Activated naive CD4-positive, alpha-beta T cell treated with anti-CD3 and anti-CD28 coated beads, Interleukin-2, amount 10 ng/mL, durations not matched to agents 7 days and 5 days (primary cell): ENCODE measurements at regions of chr14 and their contacts with region 1.

Region 1: DNA sequence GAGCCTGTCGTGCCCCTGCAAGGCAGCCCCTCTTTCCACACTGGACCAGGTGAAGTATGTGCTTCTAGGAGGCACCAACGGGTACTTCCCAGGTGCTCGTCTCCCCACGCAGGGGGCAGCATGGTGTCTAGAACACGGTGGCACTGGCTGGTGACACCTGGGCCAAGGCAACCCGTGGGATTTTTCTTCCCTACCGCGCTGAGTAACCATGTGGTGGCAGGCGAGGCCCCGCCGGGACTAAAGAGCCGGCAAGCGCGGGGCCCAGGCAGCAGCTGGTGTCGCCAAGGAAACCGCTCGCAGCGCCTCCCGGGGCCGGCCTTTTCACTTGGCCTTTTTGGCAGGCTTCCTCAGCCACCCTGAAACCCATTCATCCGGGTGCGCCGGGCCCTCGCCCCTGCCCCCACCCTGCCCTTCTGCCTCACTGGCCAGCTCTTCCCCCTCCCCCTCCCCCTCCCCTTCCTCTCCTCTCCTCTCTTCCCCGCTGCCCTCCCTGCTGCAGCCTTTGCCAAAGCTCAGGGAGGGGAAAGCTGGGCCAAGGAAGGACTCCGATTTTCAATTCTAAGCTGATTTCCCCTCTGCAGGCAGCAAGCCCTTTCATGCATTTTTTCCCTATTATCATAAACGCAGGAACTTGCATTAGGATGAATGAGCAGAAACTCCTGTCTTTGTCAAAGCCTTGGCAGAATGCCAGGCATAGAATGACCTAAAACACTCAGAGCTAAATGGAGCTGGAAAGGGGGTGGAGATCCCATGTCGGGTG is 81.2 kb downstream of the IRF2BPL start:
- DNase-seq: peak; percentile 86
- H3K4me3 Mint-ChIP-seq: no peak overlapping the region
- H3K27ac Mint-ChIP-seq: peak overlapping the region; percentile 81
- H3K4me1 Mint-ChIP-seq: peaks cover 54% of the 10 kb centered on the region
- H3K27me3 Mint-ChIP-seq: no peaks in the 10 kb centered on the region

Region 2: GRCh38 chr14:76697246-76697905 is 249.9 kb before region 1 on chr14:
- CTCF ChIA-PET with region 1: no interaction called
- DNase-seq: no peak
- H3K4me3 Mint-ChIP-seq: no peak overlapping the region
- H3K27ac Mint-ChIP-seq: no peak overlapping the region
- H3K4me1 Mint-ChIP-seq: no peaks in the 10 kb centered on the region
- H3K27me3 Mint-ChIP-seq: peaks cover 3% of the 10 kb centered on the region

Region 3: DNA sequence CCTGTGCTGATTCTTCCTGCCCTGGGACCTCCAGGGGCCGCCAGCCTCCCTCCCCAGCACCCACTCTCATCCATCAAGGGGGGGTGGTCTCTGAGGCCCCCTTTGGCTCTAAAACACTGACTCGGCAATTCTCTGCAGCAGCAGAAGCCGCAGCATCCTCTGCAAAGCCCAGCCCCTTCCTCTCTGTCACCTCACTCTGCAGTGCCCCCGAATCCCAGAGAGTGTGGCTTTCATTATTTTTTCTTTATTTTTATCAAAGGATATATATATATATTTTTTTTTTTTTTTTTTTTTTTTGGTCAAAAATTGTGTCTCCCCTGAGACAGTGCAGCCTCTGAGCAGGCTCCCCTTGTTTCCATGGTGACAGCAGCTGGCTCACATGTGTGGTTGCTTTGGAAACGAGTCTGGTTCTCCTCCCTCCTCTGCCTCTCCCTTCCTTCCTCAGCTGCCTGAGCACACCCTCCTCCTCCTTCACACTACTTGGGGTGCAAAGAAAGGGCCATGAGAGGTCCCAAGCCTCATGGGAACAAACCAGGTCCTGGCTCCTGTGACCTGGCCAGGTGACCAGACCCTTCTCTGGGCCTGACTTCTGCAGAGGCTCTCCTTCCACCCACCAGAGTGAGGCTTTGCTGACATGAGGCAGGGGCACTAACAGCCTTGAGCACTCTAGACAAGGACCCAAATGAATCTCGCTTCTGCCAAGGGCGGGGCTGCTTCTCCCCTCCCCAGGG is 20.6 kb before region 1 on chr14:
- CTCF ChIA-PET with region 1: interaction called, 17 read pairs
- DNase-seq: peak; percentile 88
- H3K4me3 Mint-ChIP-seq: peak overlapping the region; percentile 69
- H3K27ac Mint-ChIP-seq: peak overlapping the region; percentile 93
- H3K4me1 Mint-ChIP-seq: peaks cover 97% of the 10 kb centered on the region
- H3K27me3 Mint-ChIP-seq: peaks cover 20% of the 10 kb centered on the region

Region 4: DNA sequence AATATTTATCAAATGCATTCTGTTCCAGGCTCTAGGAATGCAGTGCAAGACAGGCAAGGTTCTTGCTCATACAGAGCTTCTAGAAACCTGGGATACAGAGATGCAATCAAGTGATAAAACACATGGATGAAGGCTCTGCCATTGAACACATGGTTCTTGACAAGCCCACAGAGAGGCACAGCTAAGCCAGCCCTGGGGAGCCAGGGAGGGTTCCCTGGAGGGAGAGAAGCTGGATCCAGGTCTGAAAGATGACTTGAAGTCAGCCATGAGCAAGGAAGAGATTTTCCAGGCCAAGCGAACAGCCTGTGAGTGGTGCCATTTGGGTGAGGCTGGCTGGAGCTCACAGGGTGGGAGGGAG is 15.0 kb after region 1 on chr14:
- CTCF ChIA-PET with region 1: interaction called, 21 read pairs
- DNase-seq: no peak
- H3K4me3 Mint-ChIP-seq: peak overlapping the region; percentile 69
- H3K27ac Mint-ChIP-seq: peak overlapping the region; percentile 96
- H3K4me1 Mint-ChIP-seq: peaks cover 90% of the 10 kb centered on the region
- H3K27me3 Mint-ChIP-seq: peaks cover 27% of the 10 kb centered on the region

Region 5: DNA sequence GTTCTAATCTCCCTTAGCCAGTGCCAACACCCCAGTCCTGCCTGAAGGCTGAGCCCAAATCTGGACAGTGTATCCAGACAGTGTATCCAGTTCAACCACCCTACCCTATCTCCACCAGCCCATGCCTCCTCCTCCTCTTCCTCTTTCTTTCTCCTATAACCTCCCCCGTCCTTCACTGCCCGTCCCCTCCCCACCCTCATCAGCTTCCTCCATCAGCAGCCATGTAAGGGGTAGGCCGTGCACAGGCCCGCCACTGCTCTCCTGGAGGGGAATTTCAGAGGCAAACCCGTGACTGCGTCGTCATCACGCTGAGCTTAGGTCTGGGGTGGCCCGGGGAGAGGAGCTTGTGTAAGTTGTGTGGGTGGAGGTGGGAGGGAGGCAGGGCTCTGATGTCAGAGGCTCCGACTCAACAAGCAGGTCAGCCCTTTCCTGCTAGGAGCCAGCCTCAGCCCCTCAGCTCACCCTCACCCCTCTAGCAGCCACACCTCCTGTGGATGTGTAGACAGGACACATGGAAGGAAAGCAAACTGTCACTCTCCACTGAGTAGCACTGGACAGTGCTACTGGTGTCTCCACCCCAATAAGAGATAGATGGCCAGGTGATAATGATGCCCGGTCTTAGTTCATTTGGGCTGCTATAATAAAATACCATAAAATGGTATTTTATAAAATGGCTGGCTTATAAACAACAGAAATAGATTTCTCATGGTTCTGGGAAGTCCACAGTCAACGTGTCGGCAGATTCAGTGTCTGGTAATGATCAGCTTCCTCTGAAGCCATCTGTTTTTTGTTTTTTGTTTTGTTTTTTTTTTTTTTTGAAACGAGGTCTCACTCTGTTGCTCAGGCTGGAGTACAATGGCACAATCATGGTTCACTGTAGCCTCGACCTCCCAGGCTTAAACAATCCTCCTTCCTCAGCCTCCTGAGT is 30.8 kb after region 1 on chr14:
- CTCF ChIA-PET with region 1: no interaction called
- DNase-seq: peak; percentile 83
- H3K4me3 Mint-ChIP-seq: no peak overlapping the region
- H3K27ac Mint-ChIP-seq: peak overlapping the region; percentile 83
- H3K4me1 Mint-ChIP-seq: peaks cover 21% of the 10 kb centered on the region
- H3K27me3 Mint-ChIP-seq: peaks cover 5% of the 10 kb centered on the region

Region 6: GRCh38 chr14:77040059-77040740 is 92.9 kb after region 1 on chr14:
- CTCF ChIA-PET with region 1: interaction called, 10 read pairs
- DNase-seq: peak; percentile 96
- H3K4me3 Mint-ChIP-seq: peak overlapping the region; percentile 65
- H3K27ac Mint-ChIP-seq: peak overlapping the region; percentile 100
- H3K4me1 Mint-ChIP-seq: peaks cover 94% of the 10 kb centered on the region
- H3K27me3 Mint-ChIP-seq: peaks cover 6% of the 10 kb centered on the region